Right ventricle myocardium inferior (tissue), 1 donor: ENCODE measurements at regions of chr15 and their contacts with region 1.

Region 1: GRCh38 chr15:57667171-57667849 is 39.2 kb upstream of the POLR2M start:
- DNase-seq: no peak
- ATAC-seq: peak; percentile 73

Region 2: GRCh38 chr15:57427367-57427821 is 239.9 kb before region 1 on chr15:
- intact Hi-C with region 1: no loop called
- DNase-seq: no peak
- ATAC-seq: peak; percentile 88

Region 3: GRCh38 chr15:57640935-57641682 is 26.2 kb before region 1 on chr15:
- intact Hi-C with region 1: no loop called
- DNase-seq: no peak
- ATAC-seq: peak; percentile 27

Region 4: DNA sequence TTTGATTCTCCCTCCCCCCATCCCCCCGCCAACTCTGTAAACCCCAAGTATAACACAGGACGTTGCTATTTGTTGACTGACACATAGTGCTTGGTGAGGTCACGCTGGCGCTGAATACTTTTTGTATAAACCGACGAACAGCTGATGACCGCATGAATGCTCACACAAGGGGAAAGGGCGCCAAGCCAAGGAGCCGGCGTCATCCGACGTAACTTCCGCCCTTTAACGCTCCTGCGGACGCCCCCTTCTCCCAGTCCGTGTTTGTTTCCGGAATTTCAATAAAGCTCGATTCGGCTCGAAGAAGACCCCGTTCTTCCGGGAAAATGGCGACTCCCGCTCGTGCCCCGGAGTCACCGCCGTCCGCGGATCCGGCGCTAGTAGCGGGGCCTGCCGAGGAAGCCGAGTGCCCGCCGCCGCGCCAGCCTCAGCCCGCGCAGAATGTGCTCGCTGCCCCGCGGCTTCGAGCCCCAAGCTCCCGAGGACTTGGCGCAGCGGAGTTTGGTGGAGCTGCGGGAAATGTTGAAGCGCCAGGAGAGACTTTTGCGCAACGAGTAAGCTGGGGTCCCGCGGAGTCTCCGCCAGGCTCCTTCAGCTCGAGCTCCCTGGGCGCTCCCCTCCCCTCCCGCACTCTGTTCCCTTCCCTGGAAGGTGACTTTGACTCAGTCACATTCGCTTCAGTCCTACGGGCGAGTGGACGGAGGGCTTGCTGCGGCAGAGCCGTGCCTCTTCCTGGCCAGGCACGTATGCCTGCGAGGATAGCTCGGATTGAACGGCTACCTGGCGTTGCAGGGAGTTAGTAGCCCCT is 39.3 kb after region 1 on chr15 and contains the start of gene POLR2M:
- intact Hi-C with region 1: loop called (anchors 5 kb)
- DNase-seq: peak; percentile 96
- ATAC-seq: peak; percentile 94
- total RNA-seq, gene POLR2M: 42.6 TPM